ENCODE measurements at regions of chr14 and their contacts with region 1.

Region 1: DNA sequence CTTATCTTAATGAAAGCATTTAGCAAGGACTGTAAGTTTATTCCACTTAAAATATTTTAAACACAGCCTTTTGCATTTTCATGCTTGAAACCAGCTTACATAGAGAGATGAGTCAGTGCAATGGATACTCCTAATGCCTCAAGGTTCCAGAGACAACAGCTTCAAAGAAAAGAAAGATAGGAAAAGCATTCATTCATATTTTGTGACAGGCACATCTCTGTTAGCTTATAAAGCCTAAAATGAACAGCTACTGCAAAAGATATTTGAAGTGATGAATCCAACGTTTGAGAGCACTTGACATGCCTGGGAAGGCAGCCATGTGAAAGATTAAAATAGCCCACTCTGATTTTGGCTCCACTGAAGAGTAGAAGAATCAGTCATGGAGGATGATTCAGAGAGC is 814.5 kb downstream of the RPS29 start:
- H3K4me3 ChIP-seq: no peak overlapping the region
- H3K27ac ChIP-seq: no peak overlapping the region
- H3K4me1 ChIP-seq: no peaks in the 10 kb centered on the region
- CTCF ChIP-seq: no peak

Region 2: GRCh38 chr14:48504921-48505320 is 266.8 kb before region 1 on chr14:
- CTCF ChIA-PET with region 1: no interaction called
- POLR2A ChIA-PET with region 1: interaction called, 10 read pairs
- H3K4me3 ChIP-seq: no peak overlapping the region
- H3K27ac ChIP-seq: no peak overlapping the region
- H3K4me1 ChIP-seq: no peaks in the 10 kb centered on the region
- CTCF ChIP-seq: no peak

Region 3: DNA sequence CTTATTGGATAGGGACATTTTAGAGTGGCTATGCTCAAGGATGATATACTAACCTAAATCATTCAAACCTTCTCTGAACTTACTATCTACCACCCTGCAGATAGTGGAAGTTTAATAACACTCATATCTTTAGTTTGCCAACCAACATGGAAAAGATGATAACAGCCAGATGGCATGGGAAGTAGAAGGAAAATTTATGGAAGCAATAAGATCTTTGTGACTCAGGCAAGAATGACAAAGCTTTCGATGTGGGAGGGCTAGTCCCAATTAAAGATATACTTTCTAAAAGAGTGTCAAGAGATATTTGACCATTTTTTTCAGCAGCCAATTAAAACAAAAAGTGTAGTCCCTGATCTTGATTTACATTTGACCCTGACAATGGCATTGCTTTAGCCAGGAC is 182.7 kb after region 1 on chr14:
- CTCF ChIA-PET with region 1: no interaction called
- POLR2A ChIA-PET with region 1: no interaction called
- H3K4me3 ChIP-seq: no peak overlapping the region
- H3K27ac ChIP-seq: no peak overlapping the region
- H3K4me1 ChIP-seq: no peaks in the 10 kb centered on the region
- CTCF ChIP-seq: no peak